Activated CD4-positive, alpha-beta T cell treated with anti-CD3 and anti-CD28 coated beads, Interleukin-2, amount 10 ng/mL, durations not matched to agents 24 days and 14 days (primary cell): ENCODE measurements at regions of chr3 and their contacts with region 1.

Region 1: GRCh38 chr3:160399125-160400029 is at the starts of genes IFT80 and SMC4:
- DNase-seq: peak; percentile 99
- H3K4me3 Mint-ChIP-seq: peak within 1 kb of the TSS; percentile 96
- H3K27ac Mint-ChIP-seq: peak within 1 kb of the TSS; percentile 97
- H3K4me1 Mint-ChIP-seq: peaks cover 39% of the 10 kb centered on the region
- H3K27me3 Mint-ChIP-seq: peaks cover 4% of the 10 kb centered on the region
- total RNA-seq, gene IFT80: 13.0 and 14.3 TPM in 2 replicates
- total RNA-seq, gene SMC4: 171 and 179 TPM in 2 replicates

Region 2: GRCh38 chr3:160027541-160028195 is 371.7 kb before region 1 on chr3:
- intact Hi-C with region 1: loop called (anchors 5 kb)
- DNase-seq: peak; percentile 77
- H3K4me3 Mint-ChIP-seq: peak overlapping the region; percentile 27
- H3K27ac Mint-ChIP-seq: peak overlapping the region; percentile 92
- H3K4me1 Mint-ChIP-seq: peaks cover 22% of the 10 kb centered on the region
- H3K27me3 Mint-ChIP-seq: no peaks in the 10 kb centered on the region

Region 3: DNA sequence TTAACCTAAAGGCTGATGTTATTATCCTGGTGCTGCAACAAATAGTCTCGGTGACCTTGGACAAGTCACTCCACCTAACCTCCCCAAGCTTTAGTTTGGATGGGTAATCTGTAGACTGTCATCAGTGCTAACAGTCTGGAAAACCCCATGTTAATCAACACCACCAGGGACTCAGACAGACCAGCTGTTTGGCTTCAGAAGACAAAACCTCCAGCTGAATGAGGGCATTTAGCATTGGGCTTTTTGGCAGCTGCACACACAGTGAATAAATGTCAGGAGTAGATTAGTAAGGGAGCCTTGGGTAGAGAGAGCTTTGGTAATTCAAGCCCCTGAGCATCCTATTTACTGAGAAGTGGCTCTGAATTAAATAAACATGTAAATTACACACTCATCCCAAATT is 199.0 kb before region 1 on chr3:
- intact Hi-C with region 1: no loop called
- DNase-seq: no peak
- H3K4me3 Mint-ChIP-seq: no peak overlapping the region
- H3K27ac Mint-ChIP-seq: no peak overlapping the region
- H3K4me1 Mint-ChIP-seq: no peaks in the 10 kb centered on the region
- H3K27me3 Mint-ChIP-seq: peaks cover 4% of the 10 kb centered on the region

Region 4: DNA sequence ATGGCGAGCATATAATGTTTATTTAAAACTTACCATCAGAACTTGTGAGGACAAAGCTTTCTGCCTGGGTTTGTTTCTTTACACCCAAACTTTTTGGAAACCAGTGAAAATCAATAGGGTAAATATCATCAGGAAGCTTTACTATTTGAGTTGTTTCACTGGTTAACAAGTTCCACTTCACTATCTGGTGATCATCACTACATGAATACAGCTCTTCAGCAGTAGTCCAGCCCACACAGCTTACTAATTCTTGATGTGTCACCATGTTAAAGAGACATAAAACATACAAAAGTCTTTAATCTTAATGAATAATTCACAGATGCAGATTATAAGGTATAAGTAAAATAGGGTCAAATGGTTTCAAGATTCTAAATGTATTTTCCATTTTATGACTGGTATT is 17.9 kb before region 1 on chr3:
- intact Hi-C with region 1: no loop called
- DNase-seq: no peak
- H3K4me3 Mint-ChIP-seq: no peak overlapping the region
- H3K27ac Mint-ChIP-seq: no peak overlapping the region
- H3K4me1 Mint-ChIP-seq: peaks cover 2% of the 10 kb centered on the region
- H3K27me3 Mint-ChIP-seq: no peaks in the 10 kb centered on the region

Region 5: DNA sequence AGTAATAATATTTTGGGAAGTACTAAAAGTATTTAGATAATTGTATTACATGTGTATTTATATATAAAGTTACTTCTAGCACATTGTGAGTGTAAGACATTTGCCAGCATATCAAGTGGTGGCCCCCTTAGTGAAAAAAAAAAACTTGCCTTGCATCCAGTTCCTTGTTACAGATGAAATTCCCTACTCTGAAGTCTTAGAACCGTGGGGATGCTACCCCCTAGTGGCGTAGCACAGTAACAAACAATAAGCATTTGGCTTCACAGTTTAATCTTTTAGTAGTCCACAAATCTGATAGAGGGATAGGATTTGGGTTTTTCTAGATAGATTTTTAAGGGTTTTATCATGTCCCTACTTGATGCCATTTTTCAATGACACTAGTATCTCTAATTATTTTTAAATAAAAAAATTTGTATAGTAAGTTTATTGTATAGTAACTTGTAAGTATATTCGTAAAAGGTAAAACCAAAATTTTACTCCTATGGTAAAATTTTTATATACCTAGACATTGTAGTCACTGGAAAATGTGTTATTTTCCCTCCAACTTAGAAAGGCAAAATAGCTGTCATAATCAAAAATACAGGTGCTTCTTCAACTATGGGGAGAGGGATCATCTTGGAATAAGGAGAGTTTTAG is 14.4 kb after region 1 on chr3:
- intact Hi-C with region 1: loop called (anchors 1 kb)
- DNase-seq: peak; percentile 91
- H3K4me3 Mint-ChIP-seq: no peak overlapping the region
- H3K27ac Mint-ChIP-seq: no peak overlapping the region
- H3K4me1 Mint-ChIP-seq: peaks cover 30% of the 10 kb centered on the region
- H3K27me3 Mint-ChIP-seq: no peaks in the 10 kb centered on the region

Region 6: GRCh38 chr3:160565442-160566403 is 166.3 kb after region 1 on chr3 and contains the start of gene KPNA4:
- intact Hi-C with region 1: loop called (anchors 1 kb)
- DNase-seq: peak; percentile 99
- H3K4me3 Mint-ChIP-seq: peak within 1 kb of the TSS; percentile 100
- H3K27ac Mint-ChIP-seq: peak within 1 kb of the TSS; percentile 100
- H3K4me1 Mint-ChIP-seq: peaks cover 52% of the 10 kb centered on the region
- H3K27me3 Mint-ChIP-seq: no peaks in the 10 kb centered on the region
- total RNA-seq, gene KPNA4: 72.5 and 75.9 TPM in 2 replicates